Mammary epithelial cell (primary cell): ENCODE measurements at regions of chrX and their contacts with region 1.

Region 1: GRCh38 chrX:555725-556666 is 74.6 kb upstream of the SHOX start:
- DNase-seq: no peak
- H3K4me3 ChIP-seq: no peak overlapping the region
- H3K27ac ChIP-seq: no peak overlapping the region
- H3K4me1 ChIP-seq: no peaks in the 10 kb centered on the region
- H3K27me3 ChIP-seq: no peaks in the 10 kb centered on the region
- CTCF ChIP-seq: no peak

Region 2: GRCh38 chrX:292900-293897 is 262.8 kb before region 1 on chrX:
- CTCF ChIA-PET with region 1: no interaction called
- dilution Hi-C with region 1: no loop called
- in situ Hi-C with region 1: no loop called
- intact Hi-C with region 1: no loop called
- DNase-seq: no peak
- H3K4me3 ChIP-seq: no peak overlapping the region
- H3K27ac ChIP-seq: no peak overlapping the region
- H3K4me1 ChIP-seq: no peaks in the 10 kb centered on the region
- H3K27me3 ChIP-seq: no peaks in the 10 kb centered on the region
- CTCF ChIP-seq: no peak

Region 3: GRCh38 chrX:480861-481417 is 75.1 kb before region 1 on chrX:
- CTCF ChIA-PET with region 1: no interaction called
- dilution Hi-C with region 1: loop called (anchors 5 kb)
- in situ Hi-C with region 1: no loop called
- intact Hi-C with region 1: no loop called
- DNase-seq: no peak
- H3K4me3 ChIP-seq: no peak overlapping the region
- H3K27ac ChIP-seq: no peak overlapping the region
- H3K4me1 ChIP-seq: no peaks in the 10 kb centered on the region
- H3K27me3 ChIP-seq: no peaks in the 10 kb centered on the region
- CTCF ChIP-seq: no peak

Region 4: GRCh38 chrX:623599-624315 is 67.8 kb after region 1 on chrX:
- CTCF ChIA-PET with region 1: no interaction called
- dilution Hi-C with region 1: loop called (anchors 5 kb)
- in situ Hi-C with region 1: no loop called
- intact Hi-C with region 1: no loop called
- DNase-seq: no peak
- H3K4me3 ChIP-seq: no peak overlapping the region
- H3K27ac ChIP-seq: no peak overlapping the region
- H3K4me1 ChIP-seq: no peaks in the 10 kb centered on the region
- H3K27me3 ChIP-seq: peaks cover 13% of the 10 kb centered on the region
- CTCF ChIP-seq: no peak